AG04450 (cell line): ENCODE measurements at regions of chr4 and their contacts with region 1.

Region 1: DNA sequence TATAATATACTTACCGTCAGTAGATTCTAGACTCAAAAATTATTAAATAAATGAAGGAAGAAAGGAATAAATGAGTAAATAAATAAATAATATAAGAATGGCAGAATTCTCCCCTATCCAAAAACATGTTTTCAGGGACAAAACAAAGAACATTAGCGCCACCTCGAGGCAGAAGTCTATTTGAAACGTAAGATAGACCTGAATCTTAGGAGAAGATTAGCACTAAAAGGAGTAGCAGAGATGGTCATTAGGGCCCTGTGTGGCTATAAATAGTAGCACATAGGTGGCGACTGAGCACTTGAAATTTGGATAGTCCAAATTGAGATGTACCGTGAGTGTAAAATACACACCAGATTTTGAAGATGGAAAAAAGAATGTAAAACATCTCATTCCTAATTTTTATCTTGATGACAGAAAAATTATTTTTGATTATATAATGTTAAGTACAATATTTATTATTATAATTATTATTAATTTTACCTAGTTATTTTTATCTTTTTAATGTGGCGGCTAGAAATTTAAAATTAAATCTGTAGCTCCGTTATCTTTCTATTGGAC is 24.3 kb upstream of the SRD5A3 start:
- DNase-seq: no peak
- H3K4me3 ChIP-seq: no peak overlapping the region
- H3K27ac ChIP-seq: no peak overlapping the region
- H3K27me3 ChIP-seq: peaks cover 3% of the 10 kb centered on the region
- CTCF ChIP-seq: peak; percentile 69

Region 2: GRCh38 chr4:54961357-54961975 is 360.3 kb before region 1 on chr4:
- CTCF ChIA-PET with region 1: interaction called, 10 read pairs
- POLR2A ChIA-PET with region 1: no interaction called
- DNase-seq: no peak
- H3K4me3 ChIP-seq: no peak overlapping the region
- H3K27ac ChIP-seq: no peak overlapping the region
- H3K27me3 ChIP-seq: no peaks in the 10 kb centered on the region
- CTCF ChIP-seq: peak; percentile 58

Region 3: DNA sequence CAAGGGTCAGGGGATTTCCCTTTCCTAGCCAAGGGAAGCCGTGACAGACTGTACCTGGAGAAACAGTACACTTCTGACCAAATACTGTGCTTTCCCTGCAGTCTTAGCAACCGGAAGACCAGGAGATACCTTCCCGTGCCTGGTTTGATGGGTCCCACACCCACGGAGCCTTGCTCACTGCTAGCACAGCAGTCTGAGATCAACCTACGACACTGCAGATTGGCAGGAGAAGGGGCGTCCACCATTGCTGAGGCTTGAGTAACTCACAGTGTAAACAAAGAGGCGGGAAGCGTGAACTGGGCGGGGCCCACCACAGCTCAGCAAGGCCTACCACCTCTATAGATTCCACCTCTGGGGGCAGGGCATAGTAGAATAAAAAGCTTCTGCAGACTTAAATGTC is 24.4 kb before region 1 on chr4:
- CTCF ChIA-PET with region 1: no interaction called
- POLR2A ChIA-PET with region 1: no interaction called
- DNase-seq: no peak
- H3K4me3 ChIP-seq: no peak overlapping the region
- H3K27ac ChIP-seq: no peak overlapping the region
- H3K27me3 ChIP-seq: no peaks in the 10 kb centered on the region
- CTCF ChIP-seq: no peak

Region 4: GRCh38 chr4:55617587-55618197 is 295.9 kb after region 1 on chr4:
- CTCF ChIA-PET with region 1: no interaction called
- POLR2A ChIA-PET with region 1: no interaction called
- DNase-seq: no peak
- H3K4me3 ChIP-seq: no peak overlapping the region
- H3K27ac ChIP-seq: no peak overlapping the region
- H3K27me3 ChIP-seq: no peaks in the 10 kb centered on the region
- CTCF ChIP-seq: no peak